ENCODE measurements at regions of chrX and their contacts with region 1.

Region 1: GRCh38 chrX:153646620-153647373 is at the start of gene DUSP9:
- DNase-seq: no peak
- ATAC-seq: peak; percentile 29
- H3K4me3 Mint-ChIP-seq: no peak within 1 kb of the TSS
- H3K27ac Mint-ChIP-seq: peak within 1 kb of the TSS; percentile 8
- H3K4me1 Mint-ChIP-seq: peaks cover 7% of the 10 kb centered on the region
- H3K27me3 Mint-ChIP-seq: peaks cover 43% of the 10 kb centered on the region
- total RNA-seq, gene DUSP9: 0.09 TPM in 1 of 2 experiments, not detected in the other

Region 2: GRCh38 chrX:153662266-153662665 is 15.5 kb after region 1 on chrX:
- CTCF ChIA-PET with region 1: interaction called, 12 read pairs
- DNase-seq: peak; percentile 63
- ATAC-seq: no peak
- H3K4me3 Mint-ChIP-seq: no peak overlapping the region
- H3K27ac Mint-ChIP-seq: no peak overlapping the region
- H3K4me1 Mint-ChIP-seq: no peaks in the 10 kb centered on the region
- H3K27me3 Mint-ChIP-seq: peaks cover 30% of the 10 kb centered on the region

Region 3: GRCh38 chrX:153818571-153819383 is 172.0 kb after region 1 on chrX:
- CTCF ChIA-PET with region 1: no interaction called
- DNase-seq: peak; percentile 50
- ATAC-seq: peak; percentile 87
- H3K4me3 Mint-ChIP-seq: no peak overlapping the region
- H3K27ac Mint-ChIP-seq: no peak overlapping the region
- H3K4me1 Mint-ChIP-seq: peaks cover 29% of the 10 kb centered on the region
- H3K27me3 Mint-ChIP-seq: peaks cover 20% of the 10 kb centered on the region

Region 4: DNA sequence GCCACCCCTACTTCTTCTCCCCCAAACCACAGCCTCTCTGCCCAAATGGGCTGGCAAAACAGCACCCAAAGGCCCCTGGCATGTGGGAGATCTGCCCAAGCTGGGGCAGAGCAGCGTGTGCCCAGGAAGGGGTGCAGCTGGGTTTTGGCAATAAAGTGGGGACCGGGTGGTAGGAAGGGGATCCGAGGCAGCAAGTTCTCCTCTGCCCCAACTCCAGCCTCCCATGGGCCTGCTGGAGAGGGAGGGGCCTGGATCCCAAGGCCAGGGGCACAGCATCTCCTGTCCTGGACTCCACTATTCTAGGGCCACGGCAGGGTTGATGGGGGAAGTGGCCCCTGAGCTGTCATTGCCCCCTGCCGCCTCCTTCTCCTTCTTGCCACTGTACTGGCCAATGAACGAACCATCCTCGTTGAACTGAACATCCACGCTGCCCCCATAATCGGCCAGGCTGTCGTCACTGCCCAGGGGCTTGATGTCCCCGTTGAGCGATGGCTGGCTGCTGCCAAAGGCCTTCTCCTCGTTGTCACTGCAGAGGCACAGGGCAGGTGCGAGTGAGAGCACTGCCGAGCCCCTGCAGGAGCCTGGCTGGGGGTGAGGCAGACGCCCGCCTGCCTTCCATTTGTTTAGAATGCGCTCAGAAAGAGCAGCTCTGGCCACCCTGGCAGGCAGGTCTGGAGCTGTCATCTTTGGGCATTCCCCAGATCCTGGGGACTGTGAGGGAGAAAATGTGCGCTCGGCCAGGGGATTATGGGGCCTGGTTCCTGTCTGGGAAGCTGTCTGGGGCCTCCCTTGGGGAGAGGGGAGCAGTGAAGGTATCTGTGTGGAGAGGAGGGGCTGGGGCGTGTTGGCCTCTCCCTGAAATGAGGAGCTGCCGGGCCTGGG is 215.8 kb after region 1 on chrX:
- CTCF ChIA-PET with region 1: no interaction called
- DNase-seq: no peak
- ATAC-seq: no peak
- H3K4me3 Mint-ChIP-seq: no peak overlapping the region
- H3K27ac Mint-ChIP-seq: no peak overlapping the region
- H3K4me1 Mint-ChIP-seq: peaks cover 2% of the 10 kb centered on the region
- H3K27me3 Mint-ChIP-seq: no peaks in the 10 kb centered on the region